ENCODE measurements at regions of chr9 and their contacts with region 1.

Region 1: DNA sequence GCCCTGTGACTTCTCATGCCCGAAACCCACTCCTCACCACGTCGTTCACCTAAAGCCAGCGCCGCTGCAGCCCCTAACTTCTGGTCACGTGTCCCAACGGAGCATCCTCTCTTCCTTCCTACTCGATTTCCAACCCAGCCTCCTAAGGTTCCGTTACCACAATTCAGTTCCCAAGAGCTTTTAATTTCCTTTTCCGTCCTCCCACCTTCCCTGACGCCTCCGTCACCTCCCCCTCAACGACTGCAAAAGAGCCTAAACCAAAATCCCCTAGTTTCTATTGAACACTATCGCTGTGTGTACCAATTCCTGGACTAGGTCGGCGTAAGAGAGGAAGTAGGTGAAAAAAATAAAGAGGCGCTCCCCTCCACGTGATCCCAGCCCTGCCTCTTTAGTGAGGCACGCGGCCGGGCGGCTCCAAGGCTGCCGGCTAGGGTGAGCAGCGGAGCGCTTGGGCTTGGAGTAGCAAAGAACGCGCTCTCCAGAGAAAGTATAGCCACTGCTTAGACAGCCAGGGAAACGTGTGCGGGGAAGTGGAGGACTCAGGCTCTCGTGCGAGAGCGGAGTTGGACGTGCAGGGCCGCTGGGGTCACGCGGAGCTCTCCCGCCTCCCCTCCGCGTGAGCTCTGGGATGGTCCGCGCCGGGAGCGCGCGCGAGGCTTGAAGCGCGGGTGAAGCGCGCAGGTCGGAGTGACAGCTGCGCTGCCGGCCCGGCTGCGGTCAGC is at the starts of genes CENPP and NOL8:
- DNase-seq: peak; percentile 97
- ATAC-seq: peak; percentile 91
- H3K4me3 ChIP-seq: peak within 1 kb of the TSS; percentile 79 to 98 (median 90)
- H3K4me3 Mint-ChIP-seq: peak within 1 kb of the TSS; percentile 97
- H3K27ac ChIP-seq: peak within 1 kb of the TSS; percentile 96 to 97
- H3K27ac Mint-ChIP-seq: peak within 1 kb of the TSS; percentile 97
- H3K4me1 ChIP-seq: peaks cover 15 to 20% of the 10 kb centered on the region in 2 donors
- H3K4me1 Mint-ChIP-seq: peaks cover 33% of the 10 kb centered on the region
- H3K27me3 ChIP-seq: no peaks in the 10 kb centered on the region
- H3K27me3 Mint-ChIP-seq: no peaks in the 10 kb centered on the region
- CTCF ChIP-seq: no peak
- total RNA-seq, gene CENPP: 5.3 and 6.2 TPM in 2 replicates
- total RNA-seq, gene NOL8: 89.1 and 91.0 TPM in 2 replicates

Region 2: DNA sequence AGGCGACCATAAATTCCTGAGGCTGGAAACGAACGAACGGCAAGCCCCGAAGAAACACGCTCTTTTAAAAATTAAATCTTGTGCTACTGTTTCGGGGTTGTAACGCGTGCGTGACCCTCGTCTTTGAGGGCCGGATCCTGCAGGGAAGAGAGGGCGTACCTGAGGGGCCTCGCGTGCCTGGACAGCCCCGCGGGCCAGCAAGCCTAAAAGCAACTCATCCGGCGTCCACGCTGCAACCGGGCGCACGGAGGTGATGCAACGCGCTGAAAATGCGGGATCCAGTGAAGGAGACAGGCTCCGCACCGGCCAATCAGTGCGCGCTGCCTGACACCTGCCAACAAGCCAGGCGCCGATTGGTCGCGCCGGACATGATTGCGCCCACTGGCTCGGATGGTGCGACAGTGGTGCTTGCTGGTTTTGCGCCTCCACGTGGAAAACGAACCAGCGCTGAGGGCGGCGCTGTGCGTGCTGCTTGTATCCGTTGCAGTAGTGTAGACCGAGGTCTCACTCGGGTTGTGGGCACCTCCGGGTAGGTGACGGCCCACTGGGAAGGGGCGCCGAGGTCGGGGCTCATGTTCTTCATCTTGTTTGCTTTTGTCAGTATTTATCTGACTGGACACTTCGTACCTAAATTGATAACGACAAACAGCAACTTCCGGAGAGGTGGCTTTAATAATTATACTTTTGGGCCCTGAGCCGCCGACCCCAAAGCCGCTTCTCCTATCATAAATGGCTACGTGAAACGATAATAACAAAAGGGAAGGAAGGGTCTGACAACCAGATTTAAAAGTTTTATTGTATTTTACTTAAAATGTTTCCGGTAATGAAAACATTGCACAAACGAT is 31.8 kb before region 1 on chr9 and contains the start of gene IARS1:
- CTCF ChIA-PET with region 1: interaction called, 3 read pairs
- POLR2A ChIA-PET with region 1: interaction called, 3 read pairs
- intact Hi-C with region 1: loop called (anchors 1 kb)
- DNase-seq: peak; percentile 99
- ATAC-seq: peak; percentile 96
- H3K4me3 ChIP-seq: peak within 1 kb of the TSS; percentile 74 to 92 (median 87)
- H3K4me3 Mint-ChIP-seq: peak within 1 kb of the TSS; percentile 96
- H3K27ac ChIP-seq: peak within 1 kb of the TSS; percentile 64 to 79
- H3K27ac Mint-ChIP-seq: peak within 1 kb of the TSS; percentile 98
- H3K4me1 ChIP-seq: peaks cover 31 to 32% of the 10 kb centered on the region in 2 donors
- H3K4me1 Mint-ChIP-seq: peaks cover 62% of the 10 kb centered on the region
- H3K27me3 ChIP-seq: no peaks in the 10 kb centered on the region
- H3K27me3 Mint-ChIP-seq: no peaks in the 10 kb centered on the region
- CTCF ChIP-seq: peak; percentile 19
- total RNA-seq, gene IARS1: 82.8 and 94.5 TPM in 2 replicates

Region 3: GRCh38 chr9:92384375-92384774 is 58.9 kb after region 1 on chr9:
- CTCF ChIA-PET with region 1: no interaction called
- POLR2A ChIA-PET with region 1: no interaction called
- intact Hi-C with region 1: no loop called
- DNase-seq: no peak
- ATAC-seq: no peak
- H3K4me3 ChIP-seq: no peak overlapping the region
- H3K4me3 Mint-ChIP-seq: no peak overlapping the region
- H3K27ac ChIP-seq: no peak overlapping the region
- H3K27ac Mint-ChIP-seq: no peak overlapping the region
- H3K4me1 ChIP-seq: no peaks in the 10 kb centered on the region
- H3K4me1 Mint-ChIP-seq: no peaks in the 10 kb centered on the region
- H3K27me3 ChIP-seq: no peaks in the 10 kb centered on the region
- H3K27me3 Mint-ChIP-seq: no peaks in the 10 kb centered on the region
- CTCF ChIP-seq: no peak

Region 4: GRCh38 chr9:92406477-92406876 is 81.0 kb after region 1 on chr9:
- CTCF ChIA-PET with region 1: no interaction called
- POLR2A ChIA-PET with region 1: no interaction called
- intact Hi-C with region 1: loop called (anchors 2 kb)
- DNase-seq: peak; percentile 70
- ATAC-seq: peak; percentile 94
- H3K4me3 ChIP-seq: peak overlapping the region in 4 of 5 experiments; percentile 3 to 56 (median 44)
- H3K4me3 Mint-ChIP-seq: peak overlapping the region; percentile 79
- H3K27ac ChIP-seq: peak overlapping the region; percentile 24 to 61
- H3K27ac Mint-ChIP-seq: peak overlapping the region; percentile 85
- H3K4me1 ChIP-seq: peaks cover 13 to 15% of the 10 kb centered on the region in 2 donors
- H3K4me1 Mint-ChIP-seq: peaks cover 17% of the 10 kb centered on the region
- H3K27me3 ChIP-seq: no peaks in the 10 kb centered on the region
- H3K27me3 Mint-ChIP-seq: no peaks in the 10 kb centered on the region
- CTCF ChIP-seq: no peak

Region 5: DNA sequence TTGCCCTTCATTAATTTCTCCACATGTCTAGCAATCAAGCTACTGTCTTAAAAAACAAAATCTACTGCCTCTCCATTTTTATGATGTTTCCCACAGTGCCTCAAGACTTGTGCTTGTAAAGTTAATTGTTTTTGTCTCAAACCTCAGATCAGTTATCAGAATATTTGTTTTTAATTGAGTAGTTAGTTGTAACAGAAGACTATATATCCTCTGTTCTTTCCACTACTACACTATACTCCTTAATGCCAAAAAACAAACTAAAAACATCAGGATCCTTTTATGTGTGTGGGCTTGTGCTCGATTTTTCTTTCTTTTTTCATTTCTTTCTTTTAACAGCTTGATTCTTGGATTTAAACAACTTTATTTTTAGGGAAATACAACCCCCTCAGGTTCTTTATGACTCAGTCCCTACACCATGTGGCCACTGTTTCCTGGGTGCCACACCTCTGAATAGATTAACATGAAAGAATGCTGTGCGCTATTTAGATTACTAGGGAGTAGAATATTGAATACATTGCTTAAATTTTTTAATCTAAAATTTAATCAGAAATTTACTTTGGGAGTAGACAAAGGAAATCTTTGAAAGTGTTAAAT is 155.7 kb after region 1 on chr9:
- CTCF ChIA-PET with region 1: no interaction called
- POLR2A ChIA-PET with region 1: no interaction called
- intact Hi-C with region 1: no loop called
- DNase-seq: no peak
- ATAC-seq: no peak
- H3K4me3 ChIP-seq: no peak overlapping the region
- H3K4me3 Mint-ChIP-seq: no peak overlapping the region
- H3K27ac ChIP-seq: no peak overlapping the region
- H3K27ac Mint-ChIP-seq: no peak overlapping the region
- H3K4me1 ChIP-seq: no peaks in the 10 kb centered on the region
- H3K4me1 Mint-ChIP-seq: peaks cover 2% of the 10 kb centered on the region
- H3K27me3 ChIP-seq: no peaks in the 10 kb centered on the region
- H3K27me3 Mint-ChIP-seq: no peaks in the 10 kb centered on the region
- CTCF ChIP-seq: no peak

Measured in B cell (primary cell).